Activated CD8-positive, alpha-beta T cell treated with anti-CD3 and anti-CD28 coated beads, Interleukin-2, amount 10 ng/mL, durations not matched to agents 7 days and 5 days (primary cell): ENCODE measurements at regions of chr7 and their contacts with region 1.

Region 1: GRCh38 chr7:36366718-36367560 is 22.7 kb upstream of the ANLN start:
- DNase-seq: peak; percentile 94
- ATAC-seq: peak; percentile 97
- H3K4me3 Mint-ChIP-seq: peak overlapping the region; percentile 90
- H3K27ac Mint-ChIP-seq: peak overlapping the region; percentile 37
- H3K4me1 Mint-ChIP-seq: peaks cover 9% of the 10 kb centered on the region
- H3K27me3 Mint-ChIP-seq: peaks cover 26% of the 10 kb centered on the region

Region 2: GRCh38 chr7:36348256-36348655 is 18.7 kb before region 1 on chr7:
- CTCF ChIA-PET with region 1: interaction called, 11 read pairs
- POLR2A ChIA-PET with region 1: no interaction called
- DNase-seq: no peak
- ATAC-seq: no peak
- H3K4me3 Mint-ChIP-seq: no peak overlapping the region
- H3K27ac Mint-ChIP-seq: no peak overlapping the region
- H3K4me1 Mint-ChIP-seq: no peaks in the 10 kb centered on the region
- H3K27me3 Mint-ChIP-seq: peaks cover 8% of the 10 kb centered on the region

Region 3: GRCh38 chr7:36389371-36390198 is 22.6 kb after region 1 on chr7 and contains the start of gene ANLN:
- CTCF ChIA-PET with region 1: interaction called, 26 read pairs
- POLR2A ChIA-PET with region 1: interaction called, 7 read pairs
- DNase-seq: peak; percentile 88
- ATAC-seq: peak; percentile 91
- H3K4me3 Mint-ChIP-seq: peak within 1 kb of the TSS; percentile 87
- H3K27ac Mint-ChIP-seq: peak within 1 kb of the TSS; percentile 87
- H3K4me1 Mint-ChIP-seq: peaks cover 35% of the 10 kb centered on the region
- H3K27me3 Mint-ChIP-seq: peaks cover 5% of the 10 kb centered on the region
- total RNA-seq, gene ANLN: 80.8 to 83.3 TPM

Region 4: GRCh38 chr7:36456548-36456947 is 89.6 kb after region 1 on chr7:
- CTCF ChIA-PET with region 1: no interaction called
- POLR2A ChIA-PET with region 1: no interaction called
- DNase-seq: no peak
- ATAC-seq: no peak
- H3K4me3 Mint-ChIP-seq: no peak overlapping the region
- H3K27ac Mint-ChIP-seq: no peak overlapping the region
- H3K4me1 Mint-ChIP-seq: no peaks in the 10 kb centered on the region
- H3K27me3 Mint-ChIP-seq: peaks cover 2% of the 10 kb centered on the region